GM13976 (cell line): ENCODE measurements at regions of chr6 and their contacts with region 1.

Region 1: DNA sequence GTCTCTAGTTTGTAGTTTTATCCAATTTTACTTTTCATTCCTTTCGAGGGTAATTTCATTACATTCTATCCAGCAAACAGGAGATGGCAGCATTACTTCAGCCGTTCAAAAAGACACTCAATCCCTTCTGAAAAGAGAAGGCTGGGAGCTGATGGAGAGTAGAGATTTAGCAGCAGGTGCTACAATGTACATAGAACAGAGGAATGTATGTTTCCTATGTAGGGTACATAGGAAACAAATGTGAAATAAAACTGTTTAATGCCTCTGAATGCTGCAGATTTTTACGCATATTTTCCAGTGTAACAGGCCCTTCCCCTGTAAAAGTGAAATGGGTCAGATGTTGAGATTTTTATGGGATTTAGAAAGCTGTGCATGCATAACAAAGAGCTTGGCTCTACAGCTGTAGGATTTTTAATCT is 16.0 kb downstream of the RPS12 start:
- DNase-seq: no peak
- CTCF ChIP-seq: peak; percentile 15

Region 2: GRCh38 chr6:133062077-133062476 is 231.7 kb after region 1 on chr6:
- in situ Hi-C with region 1: no loop called
- DNase-seq: no peak
- CTCF ChIP-seq: no peak

Region 3: GRCh38 chr6:133568970-133569889 is 738.9 kb after region 1 on chr6:
- in situ Hi-C with region 1: loop called (anchors 25 kb)
- DNase-seq: peak; percentile 38
- CTCF ChIP-seq: no peak